ENCODE measurements at regions of chr2 and their contacts with region 1.

Region 1: GRCh38 chr2:99377879-99378278 is 40.7 kb downstream of the EIF5B start:
- DNase-seq: no peak
- ATAC-seq: no peak
- H3K4me3 ChIP-seq: no peak overlapping the region
- H3K27ac ChIP-seq: no peak overlapping the region
- H3K4me1 ChIP-seq: no peaks in the 10 kb centered on the region
- H3K27me3 ChIP-seq: no peaks in the 10 kb centered on the region
- CTCF ChIP-seq: no peak
- POLR2A ChIP-seq: no peak

Region 2: GRCh38 chr2:99217929-99218501 is 159.9 kb before region 1 on chr2:
- intact Hi-C with region 1: no loop called
- DNase-seq: no peak
- ATAC-seq: no peak
- H3K4me3 ChIP-seq: no peak overlapping the region
- H3K27ac ChIP-seq: no peak overlapping the region
- H3K4me1 ChIP-seq: no peaks in the 10 kb centered on the region
- H3K27me3 ChIP-seq: no peaks in the 10 kb centered on the region
- CTCF ChIP-seq: no peak
- POLR2A ChIP-seq: no peak

Region 3: GRCh38 chr2:99278793-99279291 is 99.0 kb before region 1 on chr2:
- intact Hi-C with region 1: no loop called
- DNase-seq: no peak
- ATAC-seq: peak in 3 of 4 donors; percentile 36 to 42 (median 41)
- H3K4me3 ChIP-seq: peak overlapping the region in 2 of 12 donors; percentile 5 to 26
- H3K27ac ChIP-seq: peak overlapping the region in 1 of 12 donors; percentile 43
- H3K4me1 ChIP-seq: no peaks in the 10 kb centered on the region
- H3K27me3 ChIP-seq: no peaks in the 10 kb centered on the region
- CTCF ChIP-seq: no peak
- POLR2A ChIP-seq: no peak

Region 4: GRCh38 chr2:99354070-99354469 is 23.8 kb before region 1 on chr2:
- intact Hi-C with region 1: no loop called
- DNase-seq: no peak
- ATAC-seq: no peak
- H3K4me3 ChIP-seq: no peak overlapping the region
- H3K27ac ChIP-seq: no peak overlapping the region
- H3K4me1 ChIP-seq: peaks cover 0 to 31% (median 6%) of the 10 kb centered on the region in 12 donors
- H3K27me3 ChIP-seq: no peaks in the 10 kb centered on the region
- CTCF ChIP-seq: no peak
- POLR2A ChIP-seq: no peak

Region 5: DNA sequence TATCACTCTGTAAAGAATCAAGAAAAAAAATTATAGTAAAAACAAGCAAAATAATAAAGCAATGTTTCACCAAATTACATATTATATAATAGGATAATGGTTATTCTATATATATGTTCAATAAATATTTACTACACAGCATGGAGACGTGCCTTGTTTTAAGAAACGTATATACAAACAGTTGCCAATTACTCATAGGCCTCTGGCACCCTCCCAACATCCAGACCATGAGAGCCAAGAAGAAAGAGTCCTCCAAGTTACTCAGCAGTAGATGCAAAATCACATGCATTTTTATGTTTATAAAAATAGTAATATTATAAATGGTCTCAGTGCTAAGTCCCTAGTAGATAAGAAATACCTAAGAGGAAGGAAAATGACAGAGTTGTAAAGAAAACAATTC is 47.1 kb after region 1 on chr2:
- intact Hi-C with region 1: loop called in 1 of 10 experiments (anchors 10 kb)
- DNase-seq: no peak
- ATAC-seq: no peak
- H3K4me3 ChIP-seq: no peak overlapping the region
- H3K27ac ChIP-seq: no peak overlapping the region
- H3K4me1 ChIP-seq: peaks cover 0 to 42% (median 12%) of the 10 kb centered on the region in 12 donors
- H3K27me3 ChIP-seq: no peaks in the 10 kb centered on the region
- CTCF ChIP-seq: no peak
- POLR2A ChIP-seq: no peak

Region 6: GRCh38 chr2:99442837-99443236 is 65.0 kb after region 1 on chr2:
- intact Hi-C with region 1: no loop called
- DNase-seq: no peak
- ATAC-seq: peak in 2 of 4 donors; percentile 77 to 83
- H3K4me3 ChIP-seq: no peak overlapping the region
- H3K27ac ChIP-seq: no peak overlapping the region
- H3K4me1 ChIP-seq: peaks cover 0 to 13% (median 4%) of the 10 kb centered on the region in 12 donors
- H3K27me3 ChIP-seq: no peaks in the 10 kb centered on the region
- CTCF ChIP-seq: peak; percentile 17 to 65 (median 46)
- POLR2A ChIP-seq: no peak